ENCODE measurements at regions of chr1 and their contacts with region 1.

Region 1: GRCh38 chr1:31394628-31395193 is 18.3 kb upstream of the SERINC2 start:
- DNase-seq: peak; percentile 88
- H3K4me3 Mint-ChIP-seq: peak overlapping the region; percentile 76
- H3K27ac Mint-ChIP-seq: no peak overlapping the region
- H3K4me1 Mint-ChIP-seq: peaks cover 13% of the 10 kb centered on the region
- H3K27me3 Mint-ChIP-seq: peaks cover 22% of the 10 kb centered on the region

Region 2: DNA sequence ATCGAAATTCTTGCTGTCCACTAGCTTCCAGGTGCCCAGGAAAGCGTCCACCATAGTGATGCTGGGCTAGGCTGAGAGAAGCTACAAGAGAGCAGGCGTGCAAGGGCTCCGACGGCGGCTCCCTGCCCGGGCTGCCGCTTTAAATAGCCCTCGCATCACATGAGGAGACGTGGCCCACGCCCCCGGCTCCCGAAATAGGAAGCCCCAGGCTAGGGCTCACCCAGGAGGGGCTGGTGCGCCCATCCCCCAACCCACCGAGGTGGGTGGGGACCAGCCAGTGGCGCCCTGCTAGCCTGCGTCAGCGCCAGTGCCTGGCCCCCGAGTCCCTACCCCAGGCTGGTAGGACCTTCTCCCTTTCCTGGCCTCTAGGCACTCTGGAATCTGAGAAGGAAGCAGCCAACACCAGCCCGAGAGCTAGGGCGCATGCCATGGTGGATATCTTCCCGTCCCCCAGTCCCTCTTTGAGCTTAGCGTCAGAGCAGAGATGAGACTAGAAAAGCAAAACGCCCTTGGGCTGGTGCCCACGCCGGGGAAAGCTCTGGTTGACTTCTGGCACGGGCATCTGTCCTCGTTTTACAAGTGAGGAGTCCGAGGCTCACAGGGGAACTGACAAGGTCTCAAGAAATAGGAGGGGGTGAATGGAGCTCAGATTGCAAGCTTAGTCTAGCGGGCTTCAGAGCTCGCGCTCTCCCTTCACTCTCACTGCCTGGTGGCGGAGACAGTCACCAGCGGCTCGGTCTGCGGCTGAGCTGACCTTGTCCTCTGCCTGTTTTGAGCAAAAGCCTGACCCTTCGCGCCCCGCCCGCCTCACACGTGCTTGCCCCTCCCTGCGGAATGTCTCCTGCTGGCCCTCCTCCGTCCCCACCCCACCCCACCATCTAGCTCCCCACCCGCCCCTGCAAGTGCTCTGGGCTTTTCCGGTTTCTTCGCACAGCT is 21.5 kb before region 1 on chr1 and contains the start of gene FABP3:
- CTCF ChIA-PET with region 1: interaction called, 11 read pairs
- DNase-seq: peak; percentile 49
- H3K4me3 Mint-ChIP-seq: peak within 1 kb of the TSS; percentile 70
- H3K27ac Mint-ChIP-seq: peak within 1 kb of the TSS; percentile 65
- H3K4me1 Mint-ChIP-seq: peaks cover 13% of the 10 kb centered on the region
- H3K27me3 Mint-ChIP-seq: peaks cover 24% of the 10 kb centered on the region

Region 3: GRCh38 chr1:31413405-31414125 is 18.9 kb after region 1 on chr1:
- CTCF ChIA-PET with region 1: interaction called, 18 read pairs
- DNase-seq: peak; percentile 27
- H3K4me3 Mint-ChIP-seq: peak overlapping the region; percentile 65
- H3K27ac Mint-ChIP-seq: no peak overlapping the region
- H3K4me1 Mint-ChIP-seq: peaks cover 9% of the 10 kb centered on the region
- H3K27me3 Mint-ChIP-seq: peaks cover 87% of the 10 kb centered on the region

Region 4: GRCh38 chr1:31422505-31423319 is 28.0 kb after region 1 on chr1:
- CTCF ChIA-PET with region 1: interaction called, 64 read pairs
- DNase-seq: peak; percentile 74
- H3K4me3 Mint-ChIP-seq: no peak overlapping the region
- H3K27ac Mint-ChIP-seq: no peak overlapping the region
- H3K4me1 Mint-ChIP-seq: peaks cover 4% of the 10 kb centered on the region
- H3K27me3 Mint-ChIP-seq: peaks cover 45% of the 10 kb centered on the region

Region 5: DNA sequence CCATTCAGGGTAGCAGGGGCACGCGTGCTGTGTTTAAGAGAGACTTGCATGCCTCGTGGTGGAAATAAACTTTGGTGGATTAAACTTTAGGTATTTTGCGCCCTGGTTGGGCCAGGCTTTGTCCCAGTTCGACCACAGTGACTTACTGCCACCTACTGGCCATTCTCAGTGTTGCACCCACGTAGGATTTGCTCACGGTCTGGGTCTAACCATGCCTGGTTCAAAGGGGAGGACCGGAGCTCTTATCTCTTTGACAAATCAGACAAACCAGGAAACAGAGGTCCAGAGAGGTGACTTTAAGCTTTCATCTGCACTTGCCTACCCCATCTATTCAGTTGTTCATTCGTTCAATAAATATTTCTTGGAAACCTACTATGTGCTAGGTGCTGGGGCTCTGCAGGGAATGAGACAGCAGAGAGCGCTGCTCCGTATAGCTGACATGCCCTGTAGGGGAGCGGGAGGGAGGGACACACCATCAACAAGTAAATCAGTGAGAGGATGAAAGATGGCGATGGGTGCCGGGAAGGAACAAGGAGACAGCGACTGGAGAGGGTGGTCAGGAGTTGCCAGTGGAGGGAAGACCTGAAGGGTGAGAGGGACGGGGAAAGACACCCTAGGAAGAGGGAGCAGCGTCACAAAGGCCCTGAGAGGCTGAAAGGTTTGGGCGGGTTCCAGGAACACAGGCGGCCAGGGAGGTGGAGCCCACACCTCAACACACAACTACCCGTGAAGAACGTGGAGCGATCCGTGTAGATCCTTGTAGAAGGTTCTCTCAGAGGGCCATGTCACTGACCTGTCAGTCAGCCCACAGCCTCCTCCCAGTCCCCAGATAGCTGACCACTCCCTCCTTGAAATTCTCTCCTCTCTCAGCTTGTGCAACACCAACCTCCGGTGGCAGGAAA is 154.4 kb after region 1 on chr1:
- CTCF ChIA-PET with region 1: interaction called, 23 read pairs
- DNase-seq: peak; percentile 94
- H3K4me3 Mint-ChIP-seq: peak overlapping the region; percentile 35
- H3K27ac Mint-ChIP-seq: no peak overlapping the region
- H3K4me1 Mint-ChIP-seq: peaks cover 11% of the 10 kb centered on the region
- H3K27me3 Mint-ChIP-seq: peaks cover 17% of the 10 kb centered on the region

Region 6: GRCh38 chr1:31593770-31594632 is 199.3 kb after region 1 on chr1:
- CTCF ChIA-PET with region 1: no interaction called
- DNase-seq: peak; percentile 81
- H3K4me3 Mint-ChIP-seq: no peak overlapping the region
- H3K27ac Mint-ChIP-seq: no peak overlapping the region
- H3K4me1 Mint-ChIP-seq: no peaks in the 10 kb centered on the region
- H3K27me3 Mint-ChIP-seq: peaks cover 42% of the 10 kb centered on the region